ENCODE measurements at regions of chr15 and their contacts with region 1.

Region 1: DNA sequence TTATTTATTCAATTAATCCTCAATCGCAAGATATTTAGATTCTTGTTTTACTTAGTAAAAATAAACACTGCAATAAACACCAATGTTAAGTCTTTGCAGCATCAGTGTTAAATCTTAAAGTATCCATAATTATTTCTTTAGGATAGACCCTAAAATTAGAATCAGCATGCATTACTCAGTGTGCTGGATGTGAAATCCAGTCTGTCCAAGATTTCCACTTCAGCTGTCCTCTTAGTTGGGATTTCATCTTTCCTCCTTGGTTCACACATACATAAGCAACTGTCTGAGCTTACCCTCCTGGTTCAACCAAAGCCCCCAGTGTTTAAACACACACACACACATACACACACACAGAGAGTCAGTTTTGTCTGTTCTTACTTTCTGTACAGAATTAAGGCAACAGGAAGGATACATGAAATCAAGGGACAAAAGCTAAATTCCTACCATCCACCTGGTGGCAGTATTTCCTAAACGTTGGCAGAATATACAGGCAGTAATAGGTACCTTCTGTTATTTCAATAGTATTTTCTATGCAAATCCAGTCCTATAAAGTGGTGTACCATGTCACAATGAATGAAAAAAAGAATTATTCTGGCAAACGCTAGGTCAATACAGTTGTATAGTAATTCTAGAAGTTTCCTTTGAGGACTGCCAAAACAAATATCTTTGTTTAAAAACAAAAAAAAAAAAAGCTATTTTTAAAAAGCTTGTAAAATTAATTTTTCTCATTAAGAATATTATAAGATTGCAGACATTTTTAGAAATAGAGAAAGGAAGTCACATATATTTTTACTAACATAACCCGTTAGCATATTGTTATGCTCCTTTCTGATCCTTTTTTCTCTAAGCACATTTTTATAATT is 27.3 kb upstream of the DMXL2 start:
- DNase-seq: peak; percentile 75
- H3K4me3 ChIP-seq: no peak overlapping the region
- CTCF ChIP-seq: peak; percentile 61

Region 2: GRCh38 chr15:51613951-51614350 is 35.9 kb before region 1 on chr15:
- in situ Hi-C with region 1: no loop called
- DNase-seq: no peak
- H3K4me3 ChIP-seq: no peak overlapping the region
- CTCF ChIP-seq: no peak

Region 3: DNA sequence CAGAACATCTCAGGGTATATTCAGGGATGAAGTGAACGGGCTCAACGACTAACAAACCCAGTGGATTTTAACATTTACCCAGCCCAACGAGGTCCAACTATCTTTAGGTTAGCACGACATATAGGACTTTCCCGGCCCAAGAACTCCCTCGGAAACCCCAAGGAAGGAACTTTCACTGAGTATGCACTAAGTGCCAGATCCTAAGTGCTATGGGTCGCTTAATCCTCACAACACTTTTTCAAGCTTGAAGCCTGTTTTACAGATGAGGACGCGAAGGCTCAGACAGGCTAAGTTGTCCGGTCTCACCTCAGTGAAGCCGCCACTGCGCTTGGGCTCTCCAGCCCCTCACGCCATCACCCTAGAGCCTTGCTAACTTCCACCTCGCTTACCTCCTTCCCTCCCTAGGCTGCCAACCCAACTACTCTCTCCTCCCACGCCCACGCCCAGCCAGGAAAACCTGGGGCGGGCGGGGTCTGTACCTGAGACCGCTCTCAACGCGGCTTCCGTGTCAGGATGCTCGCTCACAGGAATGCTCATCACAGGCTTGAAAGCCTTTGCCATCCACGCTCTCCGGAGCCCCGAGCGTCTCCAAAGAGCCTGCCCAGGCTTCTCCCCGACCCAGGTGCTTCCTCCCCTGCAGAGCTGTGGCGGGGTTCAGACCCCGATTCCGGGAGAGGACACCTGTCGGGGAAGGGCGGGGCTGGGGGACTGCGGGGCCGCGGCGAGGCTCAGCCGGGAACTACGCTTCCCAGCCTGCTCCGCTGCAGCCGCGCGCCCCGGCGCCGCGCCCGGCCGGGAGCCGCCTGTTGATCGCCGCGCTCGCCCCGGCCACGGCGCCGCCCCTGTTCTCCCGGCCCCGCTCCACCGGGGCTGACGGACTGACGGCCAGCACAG is 101.1 kb after region 1 on chr15 and contains the start of gene TMOD2:
- in situ Hi-C with region 1: loop called (anchors 25 kb)
- DNase-seq: no peak
- H3K4me3 ChIP-seq: peak within 1 kb of the TSS; percentile 55
- CTCF ChIP-seq: no peak

Measured in astrocyte of the cerebellum (primary cell).